Activated CD4-positive, alpha-beta memory T cell treated with anti-CD3 and anti-CD28 coated beads for 36 hours (primary cell): ENCODE measurements at regions of chr6 and their contacts with region 1.

Region 1: GRCh38 chr6:137680705-137681346 is 186.2 kb upstream of the TNFAIP3 start:
- DNase-seq: no peak
- H3K4me3 Mint-ChIP-seq: peak overlapping the region; percentile 18
- H3K27ac Mint-ChIP-seq: peak overlapping the region; percentile 75
- H3K4me1 Mint-ChIP-seq: peaks cover 64% of the 10 kb centered on the region
- H3K27me3 Mint-ChIP-seq: no peaks in the 10 kb centered on the region

Region 2: DNA sequence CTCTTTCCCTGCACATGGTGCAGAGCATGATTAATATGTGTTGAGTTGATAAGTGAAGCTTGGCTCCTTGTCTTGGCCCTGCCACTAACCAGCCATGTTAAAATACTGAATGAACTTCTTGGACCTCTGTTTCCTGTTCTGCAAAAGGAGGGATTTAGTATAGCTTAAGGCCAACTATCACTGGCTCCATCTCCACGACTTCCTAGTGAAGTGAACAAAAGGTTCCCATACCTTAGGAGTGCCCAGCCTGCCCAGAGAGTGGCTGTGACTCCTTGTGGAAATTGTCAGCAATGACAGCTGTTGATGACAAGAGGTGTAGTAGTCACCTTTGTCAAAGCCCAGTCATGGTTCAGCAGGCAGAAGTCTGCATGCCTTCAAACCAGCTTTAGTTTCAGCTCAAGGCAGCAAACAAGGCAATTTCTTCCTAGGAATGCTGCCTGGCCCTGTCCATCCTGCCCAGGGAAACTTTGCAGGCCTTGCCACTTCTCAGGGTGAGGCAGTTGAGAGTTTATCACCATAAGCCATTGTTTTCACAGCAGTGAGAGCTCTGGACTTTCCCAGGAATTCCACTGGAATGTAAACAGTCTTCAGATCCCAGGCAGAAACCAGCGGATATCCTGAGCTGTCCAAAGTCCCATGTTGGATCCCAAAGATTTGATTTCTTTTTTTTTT is 16.6 kb after region 1 on chr6:
- CTCF ChIA-PET with region 1: interaction called, 24 read pairs
- POLR2A ChIA-PET with region 1: interaction called, 43 read pairs
- intact Hi-C with region 1: loop called (anchors 1 kb)
- DNase-seq: peak; percentile 52
- H3K4me3 Mint-ChIP-seq: no peak overlapping the region
- H3K27ac Mint-ChIP-seq: peak overlapping the region; percentile 43
- H3K4me1 Mint-ChIP-seq: peaks cover 57% of the 10 kb centered on the region
- H3K27me3 Mint-ChIP-seq: peaks cover 1% of the 10 kb centered on the region

Region 3: GRCh38 chr6:137767911-137768690 is 87.3 kb after region 1 on chr6:
- CTCF ChIA-PET with region 1: no interaction called
- POLR2A ChIA-PET with region 1: no interaction called
- intact Hi-C with region 1: no loop called
- DNase-seq: no peak
- H3K4me3 Mint-ChIP-seq: no peak overlapping the region
- H3K27ac Mint-ChIP-seq: peak overlapping the region; percentile 61
- H3K4me1 Mint-ChIP-seq: peaks cover 22% of the 10 kb centered on the region
- H3K27me3 Mint-ChIP-seq: no peaks in the 10 kb centered on the region

Region 4: DNA sequence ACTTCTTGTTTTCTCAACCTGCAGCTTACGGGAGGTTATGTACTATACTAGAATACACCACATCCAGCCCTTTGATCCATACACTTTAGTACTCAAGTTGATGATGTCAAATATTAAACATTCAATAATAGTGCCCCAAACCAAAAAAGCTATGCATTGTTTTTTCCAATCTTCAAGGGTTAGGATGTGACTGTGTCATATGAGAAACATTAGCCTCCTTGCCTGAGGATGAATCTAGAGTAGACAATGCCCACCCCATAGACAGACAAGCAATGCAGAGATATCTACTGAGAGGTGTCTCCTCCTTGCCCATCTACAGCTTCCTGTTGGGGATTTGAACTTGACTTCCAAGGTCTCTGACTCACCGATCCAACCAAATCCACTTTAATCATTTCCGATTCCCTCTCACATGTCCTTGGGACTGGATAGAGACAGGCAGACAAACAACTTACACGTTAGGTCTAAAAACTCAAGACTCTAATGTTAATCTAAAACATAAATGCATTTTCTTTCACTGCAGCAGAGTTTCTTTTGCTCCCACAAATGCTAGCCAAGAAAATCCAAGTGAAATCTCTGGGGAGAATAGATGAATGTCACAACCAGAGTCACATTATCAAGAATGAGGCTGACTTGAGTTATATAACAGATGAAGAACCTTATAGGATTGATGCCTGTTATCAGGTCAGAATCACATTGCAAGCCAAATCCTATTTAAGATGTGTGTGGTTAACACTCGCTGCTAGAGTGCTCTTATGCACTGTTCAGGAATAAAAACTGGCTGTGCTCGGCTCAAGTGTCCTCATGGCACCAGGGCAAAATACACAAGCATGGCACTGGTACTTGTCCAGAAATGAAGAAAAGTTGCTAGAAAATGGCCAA is 110.7 kb after region 1 on chr6:
- CTCF ChIA-PET with region 1: no interaction called
- POLR2A ChIA-PET with region 1: no interaction called
- intact Hi-C with region 1: no loop called
- DNase-seq: no peak
- H3K4me3 Mint-ChIP-seq: peak overlapping the region; percentile 62
- H3K27ac Mint-ChIP-seq: peak overlapping the region; percentile 59
- H3K4me1 Mint-ChIP-seq: peaks cover 53% of the 10 kb centered on the region
- H3K27me3 Mint-ChIP-seq: no peaks in the 10 kb centered on the region